H1 (cell line): ENCODE measurements at regions of chr6 and their contacts with region 1.

Region 1: GRCh38 chr6:2190661-2191389 is 54.6 kb downstream of the GMDS start:
- DNase-seq: no peak
- H3K4me3 ChIP-seq: no peak overlapping the region
- H3K27ac ChIP-seq: no peak overlapping the region
- H3K4me1 ChIP-seq: no peaks in the 10 kb centered on the region
- H3K27me3 ChIP-seq: no peaks in the 10 kb centered on the region
- CTCF ChIP-seq: peak in 2 of 3 experiments; percentile 8 to 51; a peak in 3 of 4 replicates
- EP300 ChIP-seq: no peak
- POLR2A ChIP-seq: no peak
- RAD21 ChIP-seq: no peak; a peak in 1 of 4 replicates

Region 2: DNA sequence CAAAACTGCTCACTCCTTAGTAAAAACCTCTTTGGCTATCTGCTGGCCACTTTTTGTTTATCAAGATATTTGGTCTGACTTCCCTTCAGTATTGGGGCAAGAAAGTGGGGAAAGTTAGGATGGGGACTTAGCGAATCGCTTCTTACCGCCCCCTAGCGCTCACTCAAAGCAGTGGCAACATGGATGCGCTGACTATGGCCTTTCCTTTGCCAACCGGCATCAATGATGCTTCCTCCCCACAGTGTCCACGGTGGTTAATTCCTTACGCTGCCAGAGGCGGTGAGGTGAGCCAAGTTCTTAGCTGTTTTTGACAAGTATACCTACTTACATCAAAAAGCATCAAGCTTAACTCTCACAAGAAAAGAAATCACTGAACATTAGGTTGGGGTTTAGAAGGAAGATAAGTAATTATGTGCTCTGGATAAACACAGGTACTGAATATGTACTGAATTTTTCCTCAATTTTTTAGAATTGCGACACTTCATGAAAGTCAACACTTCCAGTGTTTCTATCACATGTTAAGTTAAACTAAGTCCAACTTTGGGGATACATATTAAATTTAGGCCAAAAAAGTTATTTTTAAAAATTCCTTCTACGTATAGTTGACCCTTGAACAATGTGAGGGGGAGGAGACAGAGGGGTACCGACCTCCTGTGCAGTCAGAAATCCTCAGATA is 32.1 kb before region 1 on chr6:
- CTCF ChIA-PET with region 1: interaction called, 11 read pairs
- POLR2A ChIA-PET with region 1: no interaction called
- DNase-seq: peak; percentile 66 to 78
- H3K4me3 ChIP-seq: no peak overlapping the region
- H3K27ac ChIP-seq: no peak overlapping the region
- H3K4me1 ChIP-seq: peaks cover 0 to 3% (median 1%) of the 10 kb centered on the region in 4 experiments; a peak in 4 of 7 replicates
- H3K27me3 ChIP-seq: no peaks in the 10 kb centered on the region
- CTCF ChIP-seq: peak; percentile 92 to 99 (median 95)
- EP300 ChIP-seq: no peak
- POLR2A ChIP-seq: no peak
- RAD21 ChIP-seq: peak; percentile 74 to 80